ENCODE measurements at regions of chr1 and their contacts with region 1.

Region 1: DNA sequence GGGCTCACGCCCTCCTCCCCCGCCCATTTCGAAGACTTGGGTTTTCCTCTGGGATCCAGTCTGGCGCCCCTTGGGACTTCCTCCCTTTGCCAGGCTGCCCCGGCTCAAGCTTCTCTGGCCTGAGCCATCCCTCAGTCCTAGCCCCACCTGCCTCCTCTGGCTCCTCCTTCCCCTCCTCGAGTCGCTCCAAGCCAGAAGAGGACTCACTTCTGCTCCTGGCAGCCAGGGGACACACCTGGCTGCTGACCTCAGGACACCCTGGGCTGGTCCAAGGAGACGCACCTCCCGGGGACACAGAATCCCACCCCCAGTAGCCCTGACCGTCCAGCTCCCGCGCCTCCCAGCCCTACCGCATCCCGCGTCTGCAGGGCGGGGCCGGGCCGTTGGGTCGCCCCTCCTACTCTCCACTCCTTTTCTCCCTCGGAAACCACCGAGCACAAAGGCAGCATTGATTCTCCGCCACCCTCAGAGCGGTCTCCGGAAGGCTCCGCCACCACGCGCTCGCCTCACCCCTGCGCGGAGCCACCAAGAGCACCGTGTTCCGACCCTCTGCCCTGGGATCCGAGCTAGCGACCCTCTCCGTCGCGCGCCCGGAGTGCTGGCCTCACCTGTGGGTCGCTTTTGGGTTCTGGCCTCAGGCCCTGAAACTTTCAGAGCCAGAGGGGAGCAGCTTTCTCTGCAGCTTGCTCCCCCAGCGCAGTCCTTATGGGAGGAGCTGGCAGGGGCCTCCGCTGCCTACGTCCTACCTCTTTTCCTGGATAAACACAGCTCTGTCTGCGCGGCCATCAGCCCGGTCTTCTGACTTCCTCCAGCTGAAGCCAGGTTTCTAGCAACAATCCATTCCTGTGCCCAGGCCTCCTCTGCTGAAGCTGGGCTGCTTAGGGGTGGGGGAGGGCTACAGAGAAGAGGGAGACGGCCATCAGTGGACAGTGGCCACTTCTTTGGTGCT is at the start of gene C2CD4D:
- DNase-seq: no peak
- ATAC-seq: peak; percentile 54
- total RNA-seq, gene C2CD4D: not detected

Region 2: DNA sequence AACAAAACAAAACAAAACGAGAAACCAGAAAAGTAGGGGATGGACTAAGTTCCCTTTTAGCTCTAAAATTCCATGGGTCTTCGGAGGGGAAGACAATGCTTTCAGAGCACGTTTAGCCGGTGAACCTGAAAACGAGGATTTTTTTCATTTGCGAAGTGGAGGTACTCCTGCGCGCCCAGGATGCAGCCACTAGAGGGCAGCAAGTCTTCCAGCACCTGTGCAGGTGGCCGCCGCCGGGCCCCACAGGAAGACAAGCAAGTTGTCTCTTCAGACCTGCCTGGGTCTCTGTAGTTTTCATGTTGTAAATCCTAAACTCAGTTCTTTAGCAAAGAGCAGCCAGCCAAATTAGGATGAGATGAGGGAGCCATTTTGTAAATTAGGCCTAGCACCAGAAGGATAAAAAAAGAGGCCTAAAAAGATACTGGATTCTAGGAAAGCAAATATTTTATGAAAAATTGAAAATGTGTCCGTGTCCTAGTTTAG is 245.5 kb before region 1 on chr1:
- intact Hi-C with region 1: loop called (anchors 5 kb)
- DNase-seq: peak; percentile 86
- ATAC-seq: peak; percentile 82

Region 3: DNA sequence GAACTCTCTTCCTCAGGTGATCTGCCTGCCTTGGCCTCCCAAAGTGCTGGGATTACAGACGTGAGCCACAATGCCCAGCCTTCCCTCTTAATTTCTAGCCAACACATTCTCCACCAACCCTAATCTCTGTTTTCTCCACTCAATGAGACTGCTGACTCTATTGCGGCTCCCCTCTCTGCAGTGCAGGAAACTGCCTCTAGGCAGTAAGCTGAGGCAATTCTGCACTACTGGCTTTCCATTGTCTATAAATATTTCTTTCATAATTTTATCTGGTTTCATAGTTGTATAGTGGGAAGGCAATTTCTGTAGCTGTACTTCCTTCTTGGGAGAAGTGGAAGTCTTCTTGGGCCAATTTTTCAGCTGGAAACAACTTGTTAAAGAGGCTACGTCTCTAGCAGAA is 86.6 kb before region 1 on chr1:
- intact Hi-C with region 1: no loop called
- DNase-seq: no peak
- ATAC-seq: no peak

Region 4: DNA sequence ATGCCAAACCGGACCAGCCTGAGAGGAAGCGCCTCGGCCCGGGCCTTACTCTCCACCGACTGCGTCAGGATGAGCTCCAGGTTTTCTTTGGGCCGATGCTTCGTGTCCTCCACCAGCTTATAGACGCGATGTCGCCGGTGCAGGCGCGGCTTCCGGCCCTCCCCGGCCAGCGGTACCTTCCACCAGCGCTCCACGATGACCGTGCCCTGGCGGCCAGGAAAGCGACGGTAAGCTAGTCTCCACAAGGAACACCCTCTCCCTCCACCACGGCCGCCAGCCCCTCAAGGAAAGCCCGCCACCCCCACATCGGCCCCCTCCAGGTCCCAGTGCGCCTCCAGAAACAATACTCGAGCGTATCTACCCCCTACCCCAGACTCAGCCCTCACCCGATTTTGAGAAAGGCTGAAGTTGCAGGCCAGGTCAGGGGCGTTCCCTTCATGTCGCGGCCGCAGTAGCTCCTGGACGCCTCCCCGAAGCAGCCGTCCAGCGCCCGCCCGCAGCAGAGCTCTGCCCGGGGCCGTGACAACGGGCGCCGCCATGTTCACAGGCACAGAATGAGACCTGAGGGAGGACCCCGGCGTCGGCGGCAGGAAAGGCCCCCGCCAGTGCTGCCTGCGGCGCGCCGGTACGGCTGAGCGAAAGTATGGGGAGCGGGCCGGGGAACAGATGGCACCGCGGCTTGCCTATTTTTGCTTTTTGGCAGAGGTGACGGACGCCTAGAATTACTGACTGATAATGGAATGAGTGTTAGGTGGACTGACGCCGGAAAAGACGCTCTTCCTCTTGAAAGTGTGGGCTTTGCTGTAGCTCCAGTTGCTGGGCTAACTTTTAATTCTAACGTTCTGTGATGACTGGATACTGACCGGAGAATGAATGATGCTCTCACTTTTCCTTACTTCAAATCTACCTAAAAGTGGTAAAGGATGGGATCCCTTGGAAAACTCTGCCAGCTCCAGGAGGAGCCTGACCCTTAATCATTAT is 76.5 kb before region 1 on chr1 and contains the start of gene MRPL9:
- intact Hi-C with region 1: loop called (anchors 10 kb)
- DNase-seq: peak; percentile 90
- ATAC-seq: peak; percentile 99
- total RNA-seq, gene MRPL9: 45.0 TPM

Measured in Right ventricle myocardium superior (tissue), 1 donor.